ENCODE measurements at regions of chr18 and their contacts with region 1.

Region 1: DNA sequence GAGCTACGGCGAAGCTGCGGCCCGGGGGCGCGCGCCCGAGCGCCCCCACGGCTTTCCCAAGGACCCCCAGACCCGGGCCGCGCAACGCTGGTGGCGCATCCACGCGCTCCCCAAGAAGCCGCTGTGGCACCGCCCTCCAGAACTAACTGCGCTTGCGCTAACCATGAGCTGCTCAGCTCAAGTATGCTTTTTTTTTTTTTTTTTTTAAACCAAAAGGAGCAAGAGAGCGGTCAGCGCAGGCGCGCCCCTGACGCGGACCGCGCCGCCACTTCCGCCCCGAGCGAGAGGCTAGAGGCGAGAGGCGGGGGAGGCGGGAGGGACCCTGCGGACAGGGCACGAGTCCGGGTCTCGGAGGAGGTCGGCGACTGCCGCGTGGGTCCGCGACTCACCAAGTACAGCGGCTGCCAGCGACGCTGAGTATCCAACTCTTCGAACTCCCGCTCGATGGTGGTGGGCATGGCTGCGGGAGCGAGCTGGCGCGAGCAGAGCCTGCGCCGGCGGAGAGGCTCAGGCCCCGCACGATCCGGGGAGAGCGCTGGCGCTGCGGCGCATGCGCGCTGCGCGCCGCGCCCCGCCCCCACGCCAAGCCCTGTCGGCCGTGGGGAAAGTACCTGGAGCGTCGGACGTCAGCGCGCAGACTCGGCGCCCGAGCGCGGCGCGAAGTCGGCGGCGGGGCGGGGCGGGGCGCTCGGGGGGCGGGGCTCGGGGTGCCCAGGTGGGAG is at the start of gene PTPN2:
- DNase-seq: peak; percentile 94
- H3K4me3 ChIP-seq: peak within 1 kb of the TSS; percentile 89
- H3K27ac ChIP-seq: peak within 1 kb of the TSS; percentile 99
- H3K4me1 ChIP-seq: peaks cover 15% of the 10 kb centered on the region
- H3K27me3 ChIP-seq: no peaks in the 10 kb centered on the region
- CTCF ChIP-seq: no peak
- total RNA-seq, gene PTPN2: 35.8 and 44.7 TPM in 2 replicates

Region 2: DNA sequence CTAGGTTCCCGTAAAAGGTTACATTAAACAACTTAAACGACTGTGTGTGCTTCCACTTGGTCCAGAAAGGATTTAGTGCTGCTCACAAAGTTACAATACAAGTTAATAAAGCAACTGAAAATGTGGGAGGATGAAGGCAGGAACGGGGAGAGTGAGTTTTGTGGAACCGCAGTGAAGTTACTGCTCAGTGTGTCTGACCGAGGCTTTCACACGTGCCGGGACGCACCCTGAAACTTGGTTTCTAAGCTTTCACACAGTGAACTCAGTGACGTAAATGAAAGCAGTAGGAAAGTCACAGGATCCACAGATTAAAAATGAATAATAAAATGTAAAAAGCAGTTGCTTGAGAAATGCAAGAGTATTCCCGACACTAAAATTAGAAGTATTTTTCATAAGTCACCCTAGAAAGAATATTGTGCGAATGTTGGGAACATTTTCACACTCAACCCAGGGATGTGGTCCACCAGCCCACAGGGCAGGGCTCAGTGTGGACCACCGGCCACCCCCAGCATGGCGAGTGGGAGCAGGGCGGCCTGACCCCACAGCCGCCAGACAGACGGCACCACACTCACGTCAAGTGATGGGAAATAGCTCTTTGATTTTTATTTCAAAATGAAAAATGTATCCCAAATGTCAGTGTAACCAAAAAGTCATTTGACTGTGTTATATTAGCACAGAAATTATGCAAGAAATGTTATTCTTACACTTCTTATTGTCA is 1065.2 kb before region 1 on chr18:
- CTCF ChIA-PET with region 1: no interaction called
- POLR2A ChIA-PET with region 1: no interaction called
- intact Hi-C with region 1: no loop called
- DNase-seq: no peak
- H3K4me3 ChIP-seq: no peak overlapping the region
- H3K27ac ChIP-seq: no peak overlapping the region
- H3K4me1 ChIP-seq: no peaks in the 10 kb centered on the region
- H3K27me3 ChIP-seq: peaks cover 22% of the 10 kb centered on the region
- CTCF ChIP-seq: no peak

Region 3: GRCh38 chr18:12031846-12032245 is 852.0 kb before region 1 on chr18:
- CTCF ChIA-PET with region 1: no interaction called
- POLR2A ChIA-PET with region 1: no interaction called
- intact Hi-C with region 1: no loop called
- DNase-seq: no peak
- H3K4me3 ChIP-seq: no peak overlapping the region
- H3K27ac ChIP-seq: no peak overlapping the region
- H3K4me1 ChIP-seq: no peaks in the 10 kb centered on the region
- H3K27me3 ChIP-seq: no peaks in the 10 kb centered on the region
- CTCF ChIP-seq: no peak

Region 4: GRCh38 chr18:12777500-12777944 is 106.3 kb before region 1 on chr18:
- CTCF ChIA-PET with region 1: no interaction called
- POLR2A ChIA-PET with region 1: interaction called, 12 read pairs
- intact Hi-C with region 1: no loop called
- DNase-seq: peak; percentile 15
- H3K4me3 ChIP-seq: peak overlapping the region; percentile 31
- H3K27ac ChIP-seq: no peak overlapping the region
- H3K4me1 ChIP-seq: no peaks in the 10 kb centered on the region
- H3K27me3 ChIP-seq: no peaks in the 10 kb centered on the region
- CTCF ChIP-seq: no peak

Region 5: GRCh38 chr18:12849545-12849944 is 34.3 kb before region 1 on chr18:
- CTCF ChIA-PET with region 1: no interaction called
- POLR2A ChIA-PET with region 1: no interaction called
- intact Hi-C with region 1: loop called (anchors 5 kb)
- DNase-seq: no peak
- H3K4me3 ChIP-seq: no peak overlapping the region
- H3K27ac ChIP-seq: no peak overlapping the region
- H3K4me1 ChIP-seq: no peaks in the 10 kb centered on the region
- H3K27me3 ChIP-seq: no peaks in the 10 kb centered on the region
- CTCF ChIP-seq: no peak

Region 6: GRCh38 chr18:12911025-12911928 is 27.4 kb after region 1 on chr18:
- CTCF ChIA-PET with region 1: interaction called, 12 read pairs
- POLR2A ChIA-PET with region 1: no interaction called
- intact Hi-C with region 1: no loop called
- DNase-seq: no peak
- H3K4me3 ChIP-seq: no peak overlapping the region
- H3K27ac ChIP-seq: no peak overlapping the region
- H3K4me1 ChIP-seq: no peaks in the 10 kb centered on the region
- H3K27me3 ChIP-seq: no peaks in the 10 kb centered on the region
- CTCF ChIP-seq: no peak

Measured in A673 (cell line).